Left cardiac atrium (tissue), 4 donors: ENCODE measurements at regions of chr17 and their contacts with region 1.

Region 1: GRCh38 chr17:20095336-20096080 is 86.3 kb downstream of the SPECC1 start:
- DNase-seq: peak; percentile 81
- ATAC-seq: peak; percentile 58 to 70

Region 2: DNA sequence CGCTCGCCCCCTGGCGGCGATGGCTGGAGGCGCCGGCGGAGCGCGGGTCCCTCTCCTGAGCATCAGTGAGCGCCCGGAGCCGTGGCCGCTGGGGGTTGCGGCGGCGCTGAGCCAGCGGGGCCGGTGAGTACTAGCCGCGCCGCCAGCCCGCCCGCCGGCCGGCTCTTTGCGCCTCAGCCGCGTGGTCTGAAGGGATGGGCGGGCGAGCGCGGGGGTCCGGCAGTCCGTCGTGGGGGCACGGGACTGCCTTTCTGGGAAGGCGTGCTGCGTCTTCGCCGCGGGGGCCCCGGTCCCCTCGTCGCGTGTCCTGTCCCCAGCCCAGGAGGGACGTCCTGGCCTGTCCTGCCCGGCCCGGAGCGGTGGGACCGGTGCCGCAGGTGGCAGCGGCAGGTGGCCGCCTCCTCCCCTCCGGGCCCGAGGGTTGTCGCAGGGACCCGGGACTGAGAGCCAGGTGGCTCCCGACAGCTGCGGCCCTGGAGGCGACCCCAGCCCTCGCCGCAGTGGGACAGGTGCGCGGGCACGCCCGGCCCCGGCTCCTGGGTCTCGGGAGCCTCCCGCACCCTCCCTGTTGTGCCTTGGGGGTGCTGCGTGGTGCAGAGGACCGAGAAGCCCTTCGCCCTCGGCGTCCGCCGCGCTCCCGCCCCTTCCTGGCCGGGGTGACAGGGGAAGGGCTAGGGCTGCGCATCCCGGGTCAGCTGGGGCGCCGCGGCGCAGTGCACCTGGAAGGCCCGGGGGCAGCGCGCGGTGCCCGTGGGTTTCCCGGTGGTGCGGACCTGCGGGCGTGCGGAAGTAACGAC is 86.0 kb before region 1 on chr17 and contains the start of gene SPECC1:
- intact Hi-C with region 1: loop called in 1 of 2 experiments (anchors 5 kb)
- DNase-seq: peak; percentile 82
- ATAC-seq: peak; percentile 97 to 99
- total RNA-seq, gene SPECC1: 12.6 to 14.2 TPM

Region 3: GRCh38 chr17:20141198-20141972 is 45.9 kb after region 1 on chr17:
- intact Hi-C with region 1: no loop called
- DNase-seq: no peak
- ATAC-seq: peak in 1 of 2 donors; percentile 39

Region 4: GRCh38 chr17:20244671-20245070 is 149.2 kb after region 1 on chr17:
- intact Hi-C with region 1: no loop called
- DNase-seq: no peak
- ATAC-seq: no peak